Psoas muscle (tissue), 8 donors: ENCODE measurements at regions of chr4 and their contacts with region 1.

Region 1: DNA sequence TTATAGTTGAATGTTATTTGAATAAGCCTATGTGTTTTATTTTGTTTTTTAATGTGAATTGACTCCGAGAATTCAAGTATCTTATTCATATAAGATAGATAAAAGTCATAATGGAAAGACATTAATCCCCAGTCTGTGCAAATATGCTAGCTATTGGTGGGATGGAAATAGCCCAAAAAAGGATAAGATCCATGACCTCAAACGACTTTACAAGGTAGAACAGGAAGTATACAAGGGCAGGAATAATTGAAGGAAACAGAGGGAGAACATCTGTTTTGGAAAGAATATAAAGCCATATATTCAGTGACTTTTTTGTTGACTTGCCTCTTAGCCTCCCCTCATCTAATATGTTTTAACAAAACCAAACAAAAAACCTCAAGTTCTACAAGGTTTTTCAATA is 9.0 kb downstream of the ABCE1 start:
- DNase-seq: no peak
- ATAC-seq: no peak
- H3K4me3 ChIP-seq: no peak overlapping the region
- H3K27ac ChIP-seq: no peak overlapping the region
- H3K4me1 ChIP-seq: peaks cover 8% of the 10 kb centered on the region
- H3K27me3 ChIP-seq: no peaks in the 10 kb centered on the region
- CTCF ChIP-seq: no peak

Region 2: GRCh38 chr4:143539670-143540023 is 1567.5 kb before region 1 on chr4:
- intact Hi-C with region 1: loop called in 1 of 2 experiments (anchors 10 kb)
- DNase-seq: no peak
- ATAC-seq: no peak
- H3K4me3 ChIP-seq: no peak overlapping the region
- H3K27ac ChIP-seq: no peak overlapping the region
- H3K4me1 ChIP-seq: no peaks in the 10 kb centered on the region
- H3K27me3 ChIP-seq: no peaks in the 10 kb centered on the region
- CTCF ChIP-seq: no peak

Region 3: GRCh38 chr4:145148980-145149379 is 41.9 kb after region 1 on chr4:
- intact Hi-C with region 1: loop called (anchors 5 kb)
- DNase-seq: no peak
- ATAC-seq: peak in 2 of 4 donors; percentile 35 to 42
- H3K4me3 ChIP-seq: no peak overlapping the region
- H3K27ac ChIP-seq: no peak overlapping the region
- H3K4me1 ChIP-seq: peaks cover 12% of the 10 kb centered on the region
- H3K27me3 ChIP-seq: no peaks in the 10 kb centered on the region
- CTCF ChIP-seq: no peak